T-cell (primary cell): ENCODE measurements at regions of chr16 and their contacts with region 1.

Region 1: DNA sequence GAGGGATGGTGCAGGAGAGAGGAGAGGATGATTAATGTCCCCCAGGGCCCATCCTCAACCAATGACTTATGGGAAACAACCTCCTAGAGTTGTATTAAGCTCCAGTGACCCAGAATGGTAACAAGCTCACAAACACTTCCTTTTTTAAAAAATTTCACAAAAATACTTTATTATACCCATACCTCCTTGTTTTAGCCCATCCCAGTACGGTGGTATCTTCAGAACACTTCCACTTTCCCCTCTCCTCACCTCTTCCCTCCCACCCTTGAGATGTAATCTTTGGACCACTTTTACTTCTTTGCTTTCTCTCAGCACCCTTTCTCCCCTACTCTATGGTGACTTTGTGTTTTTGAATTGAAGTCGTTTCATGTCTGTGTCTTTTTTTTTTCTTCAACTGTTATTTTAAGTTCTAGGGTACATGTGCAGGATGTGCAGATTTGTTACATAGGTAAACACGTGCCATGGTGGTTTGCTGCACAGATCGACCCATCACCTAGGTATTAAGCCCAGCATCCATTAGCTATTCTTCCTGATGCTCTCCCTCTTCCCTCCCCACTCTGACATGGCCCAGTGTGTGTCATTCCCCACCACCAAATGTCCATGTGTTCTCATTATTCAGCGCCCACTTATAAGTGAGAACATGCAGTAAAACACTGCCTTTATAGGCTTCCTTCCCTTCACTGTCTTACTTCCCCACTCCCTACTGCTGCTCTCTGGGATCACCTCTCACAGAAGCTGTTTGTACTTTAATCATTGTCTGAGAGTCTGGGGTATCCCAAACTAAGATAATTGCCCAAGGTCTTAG is 124.5 kb downstream of the PRKCB start:
- DNase-seq: no peak
- ATAC-seq: peak; percentile 37 to 75 (median 58)
- H3K4me3 ChIP-seq: no peak overlapping the region
- H3K4me3 Mint-ChIP-seq: peak overlapping the region; percentile 40 to 66 (median 57)
- H3K27ac ChIP-seq: peak overlapping the region; percentile 53
- H3K27ac Mint-ChIP-seq: peak overlapping the region; percentile 87 to 93
- H3K4me1 ChIP-seq: peaks cover 37 to 38% of the 10 kb centered on the region in 2 experiments
- H3K4me1 Mint-ChIP-seq: peaks cover 68 to 71% (median 70%) of the 10 kb centered on the region in 3 donors
- H3K27me3 ChIP-seq: no peaks in the 10 kb centered on the region
- H3K27me3 Mint-ChIP-seq: no peaks in the 10 kb centered on the region

Region 2: GRCh38 chr16:23052908-23053580 is 907.2 kb before region 1 on chr16:
- CTCF ChIA-PET with region 1: no interaction called
- POLR2A ChIA-PET with region 1: no interaction called
- DNase-seq: no peak
- ATAC-seq: no peak
- H3K4me3 ChIP-seq: no peak overlapping the region
- H3K4me3 Mint-ChIP-seq: no peak overlapping the region
- H3K27ac ChIP-seq: no peak overlapping the region
- H3K27ac Mint-ChIP-seq: no peak overlapping the region
- H3K4me1 ChIP-seq: no peaks in the 10 kb centered on the region
- H3K4me1 Mint-ChIP-seq: no peaks in the 10 kb centered on the region
- H3K27me3 ChIP-seq: peaks cover 0 to 27% of the 10 kb centered on the region in 2 experiments
- H3K27me3 Mint-ChIP-seq: peaks cover 36 to 49% of the 10 kb centered on the region in 2 donors

Region 3: DNA sequence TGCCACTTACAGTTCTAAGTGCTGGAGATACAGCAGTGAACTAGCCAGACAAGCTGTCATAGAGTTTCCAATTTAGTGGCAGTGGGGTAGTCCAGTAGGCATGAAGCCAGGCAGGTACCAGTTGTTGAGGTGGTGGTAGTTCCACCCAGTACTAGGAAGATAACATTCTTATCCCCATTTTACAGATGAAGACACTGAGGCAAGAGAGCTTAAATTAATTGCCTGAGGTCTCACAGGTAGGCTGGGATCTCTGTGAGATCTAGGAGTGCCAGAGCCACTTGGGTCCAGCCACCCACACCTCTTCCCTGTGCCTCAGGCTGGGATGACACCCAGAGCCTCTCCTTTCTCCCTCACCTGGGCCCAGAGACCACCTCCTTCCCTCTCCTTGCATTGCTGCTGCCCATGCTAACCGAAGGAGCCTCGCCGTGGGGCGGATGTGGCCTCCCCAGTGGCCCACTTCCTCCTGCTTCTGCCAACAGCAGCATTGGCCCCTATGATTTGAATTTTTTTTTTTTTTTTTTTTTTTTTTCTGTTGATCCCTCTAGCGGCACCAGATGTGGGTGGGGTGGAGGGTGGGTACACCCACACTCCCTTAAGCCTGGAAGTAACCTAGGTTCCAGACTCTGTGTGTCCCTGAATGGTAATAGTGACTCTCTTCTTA is 10.5 kb before region 1 on chr16:
- CTCF ChIA-PET with region 1: interaction called in 1 of 2 experiments, 3 read pairs
- POLR2A ChIA-PET with region 1: interaction called in 1 of 2 experiments, 13 read pairs
- DNase-seq: peak; percentile 57 to 86 (median 76)
- ATAC-seq: peak; percentile 60 to 77 (median 74)
- H3K4me3 ChIP-seq: peak overlapping the region in 1 of 2 donors; percentile 52
- H3K4me3 Mint-ChIP-seq: peak overlapping the region; percentile 35 to 68 (median 65)
- H3K27ac ChIP-seq: peak overlapping the region; percentile 86
- H3K27ac Mint-ChIP-seq: peak overlapping the region; percentile 93 to 94
- H3K4me1 ChIP-seq: peaks cover 48 to 82% of the 10 kb centered on the region in 2 experiments
- H3K4me1 Mint-ChIP-seq: peaks cover 93 to 97% (median 97%) of the 10 kb centered on the region in 3 donors
- H3K27me3 ChIP-seq: no peaks in the 10 kb centered on the region
- H3K27me3 Mint-ChIP-seq: no peaks in the 10 kb centered on the region